Heart right ventricle (tissue), 16 donors: ENCODE measurements at regions of chr20 and their contacts with region 1.

Region 1: GRCh38 chr20:35741892-35742740 is at the start of gene RBM39:
- DNase-seq: peak; percentile 99 to 100
- ATAC-seq: peak; percentile 94 to 97 (median 96)
- H3K4me3 ChIP-seq: peak within 1 kb of the TSS; percentile 82 to 97 (median 86)
- H3K27ac ChIP-seq: peak within 1 kb of the TSS; percentile 97 to 100 (median 99)
- H3K4me1 ChIP-seq: peaks cover 3 to 60% (median 45%) of the 10 kb centered on the region in 9 donors
- H3K27me3 ChIP-seq: no peaks in the 10 kb centered on the region
- CTCF ChIP-seq: peak in 8 of 9 donors; percentile 39 to 75 (median 56)
- total RNA-seq, gene RBM39: 110 to 170 (median 124) TPM

Region 2: GRCh38 chr20:34709044-34709830 is 1032.9 kb before region 1 on chr20:
- intact Hi-C with region 1: no loop called
- DNase-seq: peak; percentile 84 to 86
- ATAC-seq: peak; percentile 57 to 81 (median 69)
- H3K4me3 ChIP-seq: peak overlapping the region; percentile 13 to 78 (median 73)
- H3K27ac ChIP-seq: peak overlapping the region; percentile 70 to 100 (median 97)
- H3K4me1 ChIP-seq: peaks cover 5 to 90% (median 71%) of the 10 kb centered on the region in 9 donors
- H3K27me3 ChIP-seq: no peaks in the 10 kb centered on the region
- CTCF ChIP-seq: no peak

Region 3: DNA sequence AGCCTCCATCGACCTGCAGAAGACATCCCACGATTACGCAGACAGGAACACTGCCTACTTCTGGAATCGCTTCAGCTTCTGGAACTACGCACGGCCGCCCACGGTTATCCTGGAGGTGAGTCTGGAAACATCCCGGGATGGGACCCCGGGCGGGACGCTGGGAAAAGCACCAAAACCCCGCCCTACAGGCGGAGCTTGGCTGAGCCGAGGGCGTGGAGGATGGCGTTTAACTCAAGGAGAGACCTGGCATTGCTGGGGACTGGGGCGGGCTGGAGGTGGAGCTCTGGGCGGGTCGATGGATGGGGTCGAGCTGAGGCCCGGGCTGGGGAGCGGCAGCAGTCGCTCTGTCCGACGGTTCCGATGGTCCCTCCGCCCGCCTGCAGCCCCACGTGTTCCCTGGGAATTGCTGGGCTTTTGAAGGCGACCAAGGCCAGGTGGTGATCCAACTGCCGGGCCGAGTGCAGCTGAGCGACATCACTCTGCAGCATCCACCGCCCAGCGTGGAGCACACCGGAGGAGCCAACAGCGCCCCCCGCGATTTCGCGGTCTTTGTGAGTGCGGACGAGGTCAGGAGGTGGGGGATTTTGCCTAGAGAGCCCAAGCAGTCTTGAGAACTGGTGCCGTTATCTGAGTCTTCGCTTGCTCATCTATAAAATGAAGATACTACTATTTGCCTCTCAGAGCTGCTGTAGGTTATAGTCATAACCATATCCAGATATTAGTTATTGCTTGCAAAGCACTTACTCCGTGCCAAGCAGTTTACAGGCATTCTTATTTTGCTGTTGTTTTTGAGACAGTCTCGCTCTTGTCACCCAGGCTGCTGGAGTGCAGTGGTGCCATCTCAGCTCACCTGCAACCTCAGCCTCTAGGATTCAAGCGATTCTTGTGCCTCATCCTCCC is 122.7 kb before region 1 on chr20:
- intact Hi-C with region 1: loop called in 1 of 10 experiments (anchors 2 kb)
- DNase-seq: peak; percentile 79 to 83
- ATAC-seq: peak in 7 of 8 donors; percentile 10 to 48 (median 25)
- H3K4me3 ChIP-seq: peak overlapping the region; percentile 23 to 80 (median 54)
- H3K27ac ChIP-seq: peak overlapping the region in 4 of 10 donors; percentile 19 to 94 (median 46)
- H3K4me1 ChIP-seq: peaks cover 19 to 44% (median 36%) of the 10 kb centered on the region in 9 donors
- H3K27me3 ChIP-seq: peaks cover 0 to 7% (median 0%) of the 10 kb centered on the region in 7 donors
- CTCF ChIP-seq: peak in 4 of 9 donors; percentile 35 to 45 (median 40)

Region 4: GRCh38 chr20:35680452-35681183 is 61.5 kb before region 1 on chr20:
- intact Hi-C with region 1: no loop called
- DNase-seq: no peak
- ATAC-seq: peak in 1 of 8 donors; percentile 44
- H3K4me3 ChIP-seq: no peak overlapping the region
- H3K27ac ChIP-seq: peak overlapping the region in 1 of 10 donors; percentile 53
- H3K4me1 ChIP-seq: peaks cover 0 to 11% (median 0%) of the 10 kb centered on the region in 9 donors
- H3K27me3 ChIP-seq: no peaks in the 10 kb centered on the region
- CTCF ChIP-seq: no peak

Region 5: DNA sequence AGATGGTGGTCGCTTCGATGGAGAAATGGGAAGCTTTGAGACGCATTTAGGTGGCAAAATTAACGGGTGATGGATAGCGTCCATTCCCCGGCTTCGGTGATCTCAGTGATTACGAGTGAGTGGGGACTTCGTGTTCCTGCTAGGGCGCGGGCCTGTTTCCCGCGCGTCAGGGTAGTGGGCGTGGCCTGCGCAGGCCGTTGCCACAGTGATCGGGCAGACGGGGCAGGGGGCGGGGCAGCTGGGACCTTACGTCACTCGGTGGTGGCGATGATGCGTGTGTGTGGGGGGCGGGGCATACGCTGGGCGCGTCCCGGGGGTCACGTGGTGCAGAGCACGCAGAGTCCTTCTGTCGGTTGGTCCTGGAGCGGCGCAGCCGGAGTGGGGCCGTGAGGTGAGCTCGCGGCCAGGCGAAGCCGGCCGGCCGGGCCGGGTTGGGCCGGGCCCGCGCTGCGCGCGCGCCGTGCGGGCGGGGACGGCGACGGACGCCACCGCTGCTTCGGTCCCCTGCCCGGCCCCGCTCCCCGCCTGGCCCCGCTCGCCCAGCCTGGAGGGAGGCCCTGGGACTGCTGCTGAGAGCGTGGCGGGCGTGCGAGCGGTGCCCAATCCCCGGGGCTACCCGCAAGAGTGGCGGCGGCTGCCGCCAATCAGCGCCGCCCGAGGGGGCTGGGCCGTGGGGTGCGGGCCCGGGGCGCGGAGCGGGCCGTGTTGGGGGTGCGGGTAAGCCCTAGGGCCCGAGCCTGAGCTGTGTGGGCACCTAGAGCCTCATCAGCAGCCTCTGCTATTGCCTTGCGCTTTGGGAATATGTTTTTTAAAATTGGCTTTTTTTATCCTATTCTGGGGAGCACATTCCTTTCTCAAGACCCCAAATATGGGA is 29.8 kb after region 1 on chr20 and contains the start of gene PHF20:
- intact Hi-C with region 1: loop called in 7 of 10 experiments (anchors 1 to 5 kb)
- DNase-seq: peak; percentile 99 to 100
- ATAC-seq: peak; percentile 87 to 92 (median 92)
- H3K4me3 ChIP-seq: peak within 1 kb of the TSS; percentile 68 to 92 (median 76)
- H3K27ac ChIP-seq: peak within 1 kb of the TSS; percentile 78 to 97 (median 94)
- H3K4me1 ChIP-seq: peaks cover 23 to 86% (median 74%) of the 10 kb centered on the region in 9 donors
- H3K27me3 ChIP-seq: no peaks in the 10 kb centered on the region
- CTCF ChIP-seq: no peak
- total RNA-seq, gene PHF20: 31.9 to 44.7 (median 37.8) TPM

Region 6: DNA sequence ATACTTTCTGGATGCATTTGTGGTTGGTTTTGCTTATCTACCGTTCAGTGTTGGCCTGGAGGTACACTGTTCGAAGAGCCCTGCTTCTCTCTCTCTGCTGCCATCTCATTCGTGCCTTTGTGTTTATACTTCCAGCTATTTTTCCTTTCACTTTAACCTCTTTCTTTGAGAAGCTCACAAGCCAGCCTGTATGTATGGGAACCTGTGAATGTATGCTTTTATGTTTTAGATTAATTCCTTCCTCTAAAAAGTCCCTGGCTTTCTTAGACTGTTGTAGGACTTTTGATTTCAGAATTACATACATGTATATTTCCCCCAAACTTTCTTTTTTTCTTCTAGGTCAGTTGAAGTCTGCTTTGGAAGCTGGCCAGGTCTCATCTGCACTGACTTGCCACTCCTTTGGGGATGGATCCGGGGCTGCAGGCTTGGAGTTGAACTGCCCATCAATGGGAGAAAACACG is 129.2 kb after region 1 on chr20:
- intact Hi-C with region 1: loop called in 1 of 10 experiments (anchors 10 kb)
- DNase-seq: peak; percentile 18 to 49
- ATAC-seq: peak in 2 of 8 donors; percentile 24 to 31
- H3K4me3 ChIP-seq: peak overlapping the region in 1 of 10 donors; percentile 26
- H3K27ac ChIP-seq: peak overlapping the region in 6 of 10 donors; percentile 14 to 68 (median 32)
- H3K4me1 ChIP-seq: peaks cover 0 to 39% (median 13%) of the 10 kb centered on the region in 9 donors
- H3K27me3 ChIP-seq: no peaks in the 10 kb centered on the region
- CTCF ChIP-seq: no peak